SK-N-SH (cell line): ENCODE measurements at regions of chr2 and their contacts with region 1.

Region 1: DNA sequence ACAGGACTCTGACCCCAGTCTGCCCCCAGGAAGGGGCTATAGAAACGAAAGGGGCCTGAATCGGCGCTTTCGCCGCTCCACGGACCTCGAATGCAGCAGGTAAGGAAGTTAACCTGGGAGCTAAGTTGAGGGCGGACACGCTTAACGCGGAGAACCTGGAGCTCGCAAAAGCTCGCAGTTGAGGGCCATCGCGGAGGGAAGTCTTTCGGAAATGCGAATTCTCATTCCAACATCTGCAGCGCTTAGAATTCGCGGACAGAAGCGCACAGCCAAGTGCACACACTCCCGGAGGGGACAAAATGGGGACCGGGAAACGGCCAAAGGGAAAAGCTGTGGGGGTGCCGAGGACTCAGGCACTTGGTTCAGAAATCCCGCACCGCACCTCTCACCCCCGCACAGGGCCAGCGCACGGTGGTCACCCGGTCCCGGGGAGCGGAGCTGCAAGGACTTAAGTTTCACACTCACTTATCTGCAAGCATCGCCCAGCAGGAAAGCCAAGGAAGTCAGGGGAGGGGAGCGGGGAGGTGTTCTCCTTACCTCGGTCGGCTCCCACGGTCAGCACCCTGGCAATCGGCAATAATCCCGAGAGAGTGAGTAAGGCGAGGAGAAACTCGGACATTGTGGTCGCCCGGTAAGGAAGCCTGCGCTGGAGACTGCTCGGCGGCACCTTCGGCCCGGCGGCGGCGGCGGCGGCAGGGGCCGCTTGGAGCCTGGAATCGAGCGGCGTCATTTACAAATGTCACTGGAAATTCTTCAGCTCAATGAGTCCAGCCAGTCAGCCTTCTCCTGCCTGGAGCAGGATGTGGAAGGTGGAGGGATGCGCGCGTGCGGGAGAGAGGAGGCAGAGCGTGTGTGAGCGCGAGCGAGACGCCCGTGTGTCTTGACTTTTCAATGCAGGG is 456 bp downstream of the LRP1B start:
- DNase-seq: peak; percentile 55
- H3K4me3 ChIP-seq: peak overlapping the region; percentile 65 to 83
- H3K27ac ChIP-seq: peak overlapping the region; percentile 9 to 89; a peak in 3 of 4 replicates
- H3K4me1 ChIP-seq: peaks cover 0 to 10% of the 10 kb centered on the region in 2 experiments; a peak in 3 of 4 replicates
- H3K27me3 ChIP-seq: no peaks in the 10 kb centered on the region; the same call in 1 of the 2 replicates
- CTCF ChIP-seq: no peak
- EP300 ChIP-seq: no peak
- RAD21 ChIP-seq: no peak

Region 2: DNA sequence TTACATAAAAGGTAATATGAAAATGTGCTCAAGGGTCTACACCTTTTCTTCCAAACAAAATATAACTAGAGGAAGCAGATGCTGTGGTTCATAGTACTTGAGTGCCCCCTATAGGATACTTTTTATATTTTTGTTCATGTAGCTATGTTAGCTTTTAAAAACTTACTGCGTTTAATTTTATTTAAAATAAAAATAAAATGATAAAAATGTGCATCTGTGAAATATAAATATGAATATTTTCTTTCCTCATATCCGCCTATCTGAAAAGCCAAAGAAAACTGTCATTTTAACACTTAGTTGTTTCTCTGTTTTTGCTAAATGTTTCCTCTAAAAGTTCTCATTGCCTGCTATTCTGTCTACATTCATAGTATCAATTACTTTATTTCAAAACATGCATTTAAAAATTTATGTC is 10.1 kb after region 1 on chr2:
- CTCF ChIA-PET with region 1: interaction called, 18 read pairs
- POLR2A ChIA-PET with region 1: no interaction called
- DNase-seq: no peak
- H3K4me3 ChIP-seq: no peak overlapping the region
- H3K27ac ChIP-seq: peak overlapping the region in 1 of 2 experiments; percentile 81; a peak in 2 of 4 replicates
- H3K4me1 ChIP-seq: peaks cover 0 to 11% of the 10 kb centered on the region in 2 experiments; a peak in 2 of 4 replicates
- H3K27me3 ChIP-seq: no peaks in the 10 kb centered on the region
- CTCF ChIP-seq: peak; percentile 73
- EP300 ChIP-seq: no peak; a peak in 1 of 4 replicates
- RAD21 ChIP-seq: peak; percentile 84

Region 3: DNA sequence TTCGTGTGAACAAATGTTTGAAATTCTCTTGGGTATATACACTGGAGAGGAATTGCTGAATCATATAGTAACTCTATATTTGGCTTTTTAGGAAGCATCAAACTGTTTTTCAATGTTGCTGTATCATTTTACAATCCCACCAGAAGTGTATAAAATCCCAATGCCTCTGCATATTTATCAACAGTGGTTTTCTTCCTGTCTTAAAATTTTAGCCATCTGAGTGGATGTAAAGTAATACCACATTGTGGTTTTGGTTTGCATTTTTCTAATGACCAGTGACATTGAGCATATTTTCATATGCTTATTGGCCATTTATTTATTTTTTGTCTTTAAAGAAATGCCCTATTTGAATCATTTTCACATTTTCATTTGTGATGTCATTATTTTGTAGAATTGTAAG is 23.2 kb after region 1 on chr2:
- CTCF ChIA-PET with region 1: no interaction called
- POLR2A ChIA-PET with region 1: no interaction called
- DNase-seq: no peak
- H3K4me3 ChIP-seq: no peak overlapping the region
- H3K27ac ChIP-seq: no peak overlapping the region
- H3K4me1 ChIP-seq: no peaks in the 10 kb centered on the region
- H3K27me3 ChIP-seq: no peaks in the 10 kb centered on the region
- CTCF ChIP-seq: no peak
- EP300 ChIP-seq: no peak
- RAD21 ChIP-seq: no peak